Sigmoid colon (tissue), 7 donors: ENCODE measurements at regions of chr15 and their contacts with region 1.

Region 1: GRCh38 chr15:44570361-44570760 is 33.4 kb downstream of the EIF3J start:
- DNase-seq: no peak
- H3K4me3 ChIP-seq: no peak overlapping the region
- H3K27ac ChIP-seq: no peak overlapping the region
- H3K4me1 ChIP-seq: no peaks in the 10 kb centered on the region
- H3K27me3 ChIP-seq: no peaks in the 10 kb centered on the region
- CTCF ChIP-seq: no peak
- EP300 ChIP-seq: no peak
- POLR2A ChIP-seq: no peak

Region 2: DNA sequence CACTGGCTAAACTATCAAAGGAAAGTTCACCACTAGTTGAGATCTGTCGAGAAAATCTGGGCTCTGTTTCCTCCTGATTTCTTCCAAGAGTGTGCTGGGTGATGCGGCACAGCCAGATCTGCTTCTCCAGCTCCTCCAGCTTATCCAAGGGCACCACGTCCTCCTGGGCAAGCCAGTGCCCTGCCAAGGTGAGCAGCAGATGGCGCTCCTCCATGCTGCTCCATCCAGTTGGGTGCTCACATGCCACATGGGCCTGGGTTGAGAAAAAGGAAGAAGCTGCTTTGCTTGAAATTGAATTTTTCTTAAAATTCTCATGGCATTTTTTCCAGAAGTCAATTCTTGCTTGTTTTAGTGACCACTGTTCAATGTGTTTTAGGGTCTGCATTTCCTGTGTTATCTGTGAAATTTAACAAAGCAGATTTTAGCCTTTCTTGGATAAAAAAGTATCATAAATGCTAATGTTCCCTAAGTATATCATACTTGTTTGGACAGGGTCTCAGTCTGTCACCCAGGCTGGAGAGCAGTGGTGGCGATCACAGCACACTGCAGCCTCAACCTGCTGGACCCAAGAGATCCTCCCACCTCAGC is 13.9 kb after region 1 on chr15:
- intact Hi-C with region 1: no loop called
- DNase-seq: no peak
- H3K4me3 ChIP-seq: no peak overlapping the region
- H3K27ac ChIP-seq: no peak overlapping the region
- H3K4me1 ChIP-seq: no peaks in the 10 kb centered on the region
- H3K27me3 ChIP-seq: no peaks in the 10 kb centered on the region
- CTCF ChIP-seq: peak in 1 of 4 experiments; percentile 10
- EP300 ChIP-seq: no peak
- POLR2A ChIP-seq: no peak

Region 3: DNA sequence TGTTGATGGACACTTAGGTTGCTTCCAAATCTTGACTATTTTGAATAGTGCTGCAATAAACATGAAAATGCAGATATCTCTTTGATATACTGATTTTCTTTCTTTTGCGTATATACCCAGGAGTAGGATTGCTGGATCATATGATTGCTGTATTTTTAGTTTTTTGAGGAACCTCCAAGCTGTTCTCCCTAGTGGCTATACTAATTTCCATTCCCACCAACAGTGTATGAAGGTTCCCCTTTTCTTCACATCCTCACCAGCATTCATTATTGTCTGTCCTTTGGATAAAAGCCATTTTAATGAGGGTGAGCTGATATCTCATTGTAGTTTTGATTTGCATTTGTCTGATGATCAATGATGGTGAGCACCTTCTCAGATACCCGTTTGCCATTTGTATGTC is 128.3 kb after region 1 on chr15:
- intact Hi-C with region 1: no loop called
- DNase-seq: no peak
- H3K4me3 ChIP-seq: no peak overlapping the region
- H3K27ac ChIP-seq: no peak overlapping the region
- H3K4me1 ChIP-seq: no peaks in the 10 kb centered on the region
- H3K27me3 ChIP-seq: no peaks in the 10 kb centered on the region
- CTCF ChIP-seq: no peak
- EP300 ChIP-seq: no peak
- POLR2A ChIP-seq: no peak

Region 4: GRCh38 chr15:44738340-44738984 is 168.1 kb after region 1 on chr15:
- intact Hi-C with region 1: loop called (anchors 10 kb)
- DNase-seq: no peak
- H3K4me3 ChIP-seq: no peak overlapping the region
- H3K27ac ChIP-seq: no peak overlapping the region
- H3K4me1 ChIP-seq: peaks cover 0 to 11% (median 6%) of the 10 kb centered on the region in 4 donors
- H3K27me3 ChIP-seq: no peaks in the 10 kb centered on the region
- CTCF ChIP-seq: peak; percentile 59 to 75 (median 68)
- EP300 ChIP-seq: no peak
- POLR2A ChIP-seq: no peak